Activated naive CD4-positive, alpha-beta T cell treated with anti-CD3 and anti-CD28 coated beads for 36 hours (primary cell): ENCODE measurements at regions of chr19 and their contacts with region 1.

Region 1: DNA sequence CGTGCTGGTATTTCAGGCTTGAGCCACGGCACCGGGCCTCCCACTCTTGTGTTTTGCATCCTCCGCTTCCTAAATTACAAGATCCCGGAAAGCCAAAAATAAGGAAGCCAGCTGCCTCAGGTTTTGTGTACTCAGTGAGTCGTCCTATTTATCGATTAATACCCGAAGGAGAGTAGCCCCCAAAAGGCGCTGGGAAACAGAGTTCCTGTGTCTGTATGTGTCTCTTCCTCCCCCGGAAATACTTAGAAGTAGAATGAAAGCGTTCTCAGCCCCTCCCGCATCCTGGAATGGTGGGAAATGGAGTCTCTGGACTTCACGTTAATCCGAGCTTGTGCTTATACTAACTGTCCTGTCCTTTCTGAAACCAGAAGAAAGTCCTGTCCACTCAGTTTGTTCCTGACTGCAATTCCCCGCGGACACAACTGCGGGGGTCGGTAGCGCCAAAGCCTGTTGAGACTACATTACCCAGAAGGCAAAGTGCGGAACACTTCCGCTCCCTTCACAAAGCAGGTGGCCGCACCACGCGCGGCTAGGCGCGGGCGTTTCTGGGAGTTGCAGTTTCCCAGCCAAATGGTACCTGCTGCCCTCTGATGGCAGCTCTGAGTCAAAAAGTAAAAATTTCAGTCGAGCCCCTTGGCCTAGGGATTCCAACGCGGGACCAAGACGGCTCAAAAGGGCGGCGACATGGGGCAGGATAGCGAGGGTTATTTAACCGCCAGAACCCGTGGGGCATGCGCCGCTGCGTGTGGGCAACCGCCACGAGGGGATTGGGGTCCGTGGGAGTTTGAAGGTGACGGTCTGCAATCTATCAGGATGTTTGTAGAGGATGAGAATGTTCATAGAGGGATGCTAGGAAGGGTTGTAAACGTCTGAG is 2.2 kb upstream of the GSK3A start:
- DNase-seq: peak; percentile 96
- H3K4me3 Mint-ChIP-seq: peak overlapping the region; percentile 86
- H3K27ac Mint-ChIP-seq: peak overlapping the region; percentile 99
- H3K4me1 Mint-ChIP-seq: peaks cover 46% of the 10 kb centered on the region
- H3K27me3 Mint-ChIP-seq: no peaks in the 10 kb centered on the region

Region 2: DNA sequence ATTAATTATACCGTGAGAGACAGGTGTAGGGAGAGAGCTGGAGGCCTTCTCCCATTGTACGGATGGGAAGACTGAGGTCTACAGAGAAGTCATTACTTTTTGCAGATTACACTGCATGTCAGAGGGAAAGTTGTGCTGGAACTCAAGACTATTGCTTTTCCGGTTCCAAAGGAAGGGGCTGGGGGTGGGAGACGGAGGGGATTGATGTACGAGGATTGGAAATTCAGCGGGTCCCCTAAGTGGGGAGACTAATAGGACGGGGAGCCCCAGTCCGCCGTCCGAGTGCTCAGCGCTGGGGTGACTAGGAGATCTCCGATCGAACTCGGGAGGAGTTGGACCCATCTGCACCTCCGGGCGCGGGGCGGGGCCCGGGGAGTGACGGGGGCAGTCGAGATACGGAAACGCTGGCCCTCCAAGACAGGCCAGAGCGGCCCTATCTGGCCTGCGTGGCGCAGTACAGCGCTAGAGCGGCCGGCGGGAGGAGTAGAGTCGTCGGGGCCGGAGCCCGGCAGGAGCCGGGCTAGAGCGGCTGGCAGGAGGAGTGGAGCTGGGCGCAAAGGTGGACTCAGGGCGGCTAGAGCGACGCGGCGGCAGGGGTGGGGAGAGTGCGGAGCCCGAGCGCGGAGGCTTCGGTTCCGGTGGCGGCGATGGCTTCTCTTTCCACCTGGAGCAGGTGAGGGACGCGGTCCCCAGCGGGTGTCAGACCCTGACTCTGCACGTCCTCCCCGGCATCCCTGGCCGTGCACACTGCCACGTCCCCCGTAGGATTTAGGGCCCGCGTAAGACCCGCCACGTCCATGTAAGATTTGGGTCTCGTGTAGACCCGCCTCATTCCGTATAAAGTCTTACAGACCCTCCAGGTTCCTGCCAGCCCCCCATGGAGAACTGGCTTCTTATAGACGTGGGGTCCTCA is 360.5 kb before region 1 on chr19:
- CTCF ChIA-PET with region 1: no interaction called
- intact Hi-C with region 1: loop called (anchors 10 kb)
- DNase-seq: peak; percentile 91
- H3K4me3 Mint-ChIP-seq: peak overlapping the region; percentile 90
- H3K27ac Mint-ChIP-seq: peak overlapping the region; percentile 92
- H3K4me1 Mint-ChIP-seq: peaks cover 54% of the 10 kb centered on the region
- H3K27me3 Mint-ChIP-seq: no peaks in the 10 kb centered on the region

Region 3: GRCh38 chr19:42108527-42109389 is 135.8 kb before region 1 on chr19:
- CTCF ChIA-PET with region 1: interaction called, 9 read pairs
- intact Hi-C with region 1: loop called (anchors 1 kb)
- DNase-seq: peak; percentile 97
- H3K4me3 Mint-ChIP-seq: no peak overlapping the region
- H3K27ac Mint-ChIP-seq: peak overlapping the region; percentile 44
- H3K4me1 Mint-ChIP-seq: peaks cover 55% of the 10 kb centered on the region
- H3K27me3 Mint-ChIP-seq: no peaks in the 10 kb centered on the region

Region 4: GRCh38 chr19:42199440-42200115 is 45.0 kb before region 1 on chr19:
- CTCF ChIA-PET with region 1: no interaction called
- intact Hi-C with region 1: loop called (anchors 1 kb)
- DNase-seq: peak; percentile 88
- H3K4me3 Mint-ChIP-seq: peak overlapping the region; percentile 58
- H3K27ac Mint-ChIP-seq: peak overlapping the region; percentile 96
- H3K4me1 Mint-ChIP-seq: peaks cover 79% of the 10 kb centered on the region
- H3K27me3 Mint-ChIP-seq: no peaks in the 10 kb centered on the region

Region 5: GRCh38 chr19:42268704-42269477 is 24.3 kb after region 1 on chr19 and contains the start of gene CIC:
- CTCF ChIA-PET with region 1: interaction called, 7 read pairs
- intact Hi-C with region 1: loop called (anchors 1 kb)
- DNase-seq: peak; percentile 100
- H3K4me3 Mint-ChIP-seq: no peak within 1 kb of the TSS
- H3K27ac Mint-ChIP-seq: peak within 1 kb of the TSS; percentile 99
- H3K4me1 Mint-ChIP-seq: peaks cover 30% of the 10 kb centered on the region
- H3K27me3 Mint-ChIP-seq: no peaks in the 10 kb centered on the region
- total RNA-seq, gene CIC: 60.2 to 61.5 TPM

Region 6: DNA sequence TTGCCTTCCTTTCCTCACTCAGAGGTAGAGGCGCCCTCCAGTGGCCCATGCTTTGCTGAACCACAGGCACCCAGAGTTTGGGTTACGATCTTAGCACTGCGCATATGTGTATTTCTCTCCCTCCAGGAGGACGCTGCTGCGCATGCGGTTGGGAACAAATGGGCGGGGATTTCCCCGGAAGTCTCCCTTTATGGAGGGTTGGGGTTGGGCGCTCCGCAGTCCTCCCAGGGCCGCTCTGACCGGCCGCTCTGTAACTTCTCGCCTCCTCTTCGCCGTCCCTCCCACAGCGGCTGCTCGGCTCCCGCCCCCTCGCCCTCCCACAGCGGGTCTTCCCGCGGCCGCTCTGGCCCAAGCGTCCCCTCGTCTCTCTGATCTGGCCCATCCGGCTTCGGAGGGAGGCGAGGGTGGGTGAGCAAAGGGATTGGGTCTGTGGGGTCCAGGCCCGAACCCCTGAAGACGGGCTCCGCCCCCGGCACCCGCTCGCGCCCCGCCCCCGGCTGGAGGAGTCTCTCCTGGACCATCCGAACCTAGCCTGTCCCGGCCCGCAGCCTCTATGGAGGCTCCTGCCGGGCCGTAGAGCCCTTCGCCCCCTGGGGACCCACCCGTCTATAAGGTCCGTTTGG is 80.8 kb after region 1 on chr19 and contains the start of gene MEGF8:
- CTCF ChIA-PET with region 1: no interaction called
- intact Hi-C with region 1: loop called (anchors 1 kb)
- DNase-seq: peak; percentile 100
- H3K4me3 Mint-ChIP-seq: peak within 1 kb of the TSS; percentile 81
- H3K27ac Mint-ChIP-seq: peak within 1 kb of the TSS; percentile 16
- H3K4me1 Mint-ChIP-seq: peaks cover 13% of the 10 kb centered on the region
- H3K27me3 Mint-ChIP-seq: peaks cover 14% of the 10 kb centered on the region
- total RNA-seq, gene MEGF8: 3.3 to 4.0 TPM